ENCODE measurements at regions of chr4 and their contacts with region 1.

Region 1: DNA sequence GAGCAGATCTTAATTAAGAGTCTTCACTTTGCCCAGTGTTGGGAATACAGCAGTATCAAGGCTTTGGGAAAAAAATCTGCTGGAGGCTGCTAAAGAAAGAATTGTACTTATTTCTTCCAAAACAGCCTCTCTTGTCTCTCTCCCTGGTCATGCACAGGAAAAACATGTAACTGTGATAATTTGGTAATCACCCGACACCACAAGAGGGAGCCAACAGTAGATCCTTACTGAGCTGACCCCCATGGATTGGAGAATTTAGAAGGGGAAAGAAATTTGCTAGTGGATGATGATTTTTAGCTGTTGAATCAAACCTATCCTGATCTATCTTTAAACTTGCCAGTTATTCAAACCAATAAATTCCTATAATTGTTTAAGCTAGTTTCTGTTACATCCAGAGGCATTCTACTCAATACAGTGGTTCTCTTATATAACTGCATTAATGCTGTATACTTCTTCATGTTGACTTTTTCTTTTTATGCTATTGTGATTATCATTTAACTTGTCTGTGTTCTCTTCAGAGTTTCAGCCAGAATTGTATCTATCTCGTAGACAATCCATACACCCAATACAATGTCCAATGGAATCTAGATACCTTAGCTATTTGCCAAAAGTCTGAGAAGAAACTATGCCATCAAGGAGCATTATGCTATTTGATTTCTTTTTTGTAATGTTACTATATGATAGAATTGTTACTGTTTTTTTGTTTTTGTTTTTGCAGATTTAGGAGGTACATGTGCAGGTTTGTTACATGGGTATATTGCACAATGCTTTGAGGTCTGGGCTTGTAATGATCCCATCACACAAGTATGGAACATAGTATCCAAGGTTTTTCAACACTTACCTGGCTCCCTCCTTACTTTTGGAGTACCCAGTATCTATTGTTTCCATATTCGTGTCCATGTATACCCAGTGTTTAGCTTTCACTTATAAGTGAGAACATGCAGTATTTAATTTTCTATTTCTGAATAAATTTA is 31.3 kb upstream of the ARHGEF38 start:
- DNase-seq: peak; percentile 15
- ATAC-seq: peak; percentile 95
- H3K4me3 ChIP-seq: no peak overlapping the region
- H3K27ac ChIP-seq: no peak overlapping the region
- H3K4me1 ChIP-seq: no peaks in the 10 kb centered on the region
- H3K27me3 ChIP-seq: no peaks in the 10 kb centered on the region
- CTCF ChIP-seq: peak; percentile 60 to 82 (median 70)
- EP300 ChIP-seq: no peak
- POLR2A ChIP-seq: no peak
- RAD21 ChIP-seq: peak; percentile 96

Region 2: DNA sequence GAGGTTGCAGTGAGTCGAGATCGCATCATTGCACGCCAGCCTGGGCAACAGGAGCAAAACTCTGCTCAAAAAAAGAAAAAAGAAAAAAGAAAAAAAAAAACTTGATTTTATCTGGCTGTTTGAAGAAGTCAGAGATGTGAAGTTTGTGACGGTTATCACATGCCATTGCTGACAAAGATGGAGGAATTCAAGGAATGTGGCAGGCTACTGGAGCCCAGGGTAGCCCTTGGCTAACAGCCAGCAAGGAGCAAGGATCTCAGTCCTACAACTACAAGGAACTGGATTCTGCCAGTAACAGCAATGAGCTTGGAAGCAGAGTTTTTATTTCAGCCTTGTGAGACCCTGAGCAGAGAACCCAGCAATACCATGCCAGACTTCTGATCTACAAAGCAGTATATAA is 398.8 kb before region 1 on chr4:
- CTCF ChIA-PET with region 1: no interaction called
- POLR2A ChIA-PET with region 1: no interaction called
- RAD21 ChIA-PET with region 1: no interaction called
- SMC1A ChIA-PET with region 1: no interaction called
- in situ Hi-C with region 1: no loop called
- intact Hi-C with region 1: no loop called
- DNase-seq: no peak
- ATAC-seq: no peak
- H3K4me3 ChIP-seq: no peak overlapping the region
- H3K27ac ChIP-seq: no peak overlapping the region
- H3K4me1 ChIP-seq: no peaks in the 10 kb centered on the region
- H3K27me3 ChIP-seq: no peaks in the 10 kb centered on the region
- CTCF ChIP-seq: no peak
- EP300 ChIP-seq: no peak
- POLR2A ChIP-seq: no peak
- RAD21 ChIP-seq: no peak

Region 3: GRCh38 chr4:105544520-105545286 is 23.6 kb after region 1 on chr4:
- CTCF ChIA-PET with region 1: interaction called, 21 read pairs
- POLR2A ChIA-PET with region 1: no interaction called
- RAD21 ChIA-PET with region 1: interaction called, 5 read pairs
- SMC1A ChIA-PET with region 1: interaction called, 4 read pairs
- in situ Hi-C with region 1: no loop called
- intact Hi-C with region 1: no loop called
- DNase-seq: no peak
- ATAC-seq: no peak
- H3K4me3 ChIP-seq: no peak overlapping the region
- H3K27ac ChIP-seq: no peak overlapping the region
- H3K4me1 ChIP-seq: no peaks in the 10 kb centered on the region
- H3K27me3 ChIP-seq: no peaks in the 10 kb centered on the region
- CTCF ChIP-seq: no peak
- EP300 ChIP-seq: no peak
- POLR2A ChIP-seq: no peak
- RAD21 ChIP-seq: no peak

Region 4: GRCh38 chr4:105594099-105594993 is 73.2 kb after region 1 on chr4:
- CTCF ChIA-PET with region 1: interaction called, 8 read pairs
- POLR2A ChIA-PET with region 1: no interaction called
- RAD21 ChIA-PET with region 1: no interaction called
- SMC1A ChIA-PET with region 1: interaction called, 4 read pairs
- in situ Hi-C with region 1: no loop called
- intact Hi-C with region 1: loop called (anchors 5 kb)
- DNase-seq: peak; percentile 59
- ATAC-seq: peak; percentile 95
- H3K4me3 ChIP-seq: peak overlapping the region; percentile 47
- H3K27ac ChIP-seq: peak overlapping the region; percentile 77
- H3K4me1 ChIP-seq: no peaks in the 10 kb centered on the region; the same call in 1 of the 2 replicates
- H3K27me3 ChIP-seq: no peaks in the 10 kb centered on the region
- CTCF ChIP-seq: no peak
- EP300 ChIP-seq: peak; percentile 85 to 92
- POLR2A ChIP-seq: no peak
- RAD21 ChIP-seq: no peak

Region 5: GRCh38 chr4:105631818-105632400 is 110.8 kb after region 1 on chr4:
- CTCF ChIA-PET with region 1: interaction called, 5 read pairs
- POLR2A ChIA-PET with region 1: no interaction called
- RAD21 ChIA-PET with region 1: interaction called, 6 read pairs
- SMC1A ChIA-PET with region 1: interaction called, 13 read pairs
- in situ Hi-C with region 1: no loop called
- intact Hi-C with region 1: no loop called
- DNase-seq: no peak
- ATAC-seq: peak; percentile 20; the same call in 2 of the 3 replicates
- H3K4me3 ChIP-seq: no peak overlapping the region
- H3K27ac ChIP-seq: no peak overlapping the region
- H3K4me1 ChIP-seq: peaks cover 15% of the 10 kb centered on the region
- H3K27me3 ChIP-seq: no peaks in the 10 kb centered on the region
- CTCF ChIP-seq: no peak
- EP300 ChIP-seq: no peak
- POLR2A ChIP-seq: no peak
- RAD21 ChIP-seq: no peak

Region 6: GRCh38 chr4:105666693-105667092 is 145.6 kb after region 1 on chr4:
- CTCF ChIA-PET with region 1: interaction called, 160 read pairs
- POLR2A ChIA-PET with region 1: interaction called, 4 read pairs
- RAD21 ChIA-PET with region 1: interaction called, 103 read pairs
- SMC1A ChIA-PET with region 1: interaction called, 146 read pairs
- in situ Hi-C with region 1: no loop called
- intact Hi-C with region 1: loop called (anchors 1 kb)
- DNase-seq: no peak
- ATAC-seq: peak; percentile 85
- H3K4me3 ChIP-seq: no peak overlapping the region
- H3K27ac ChIP-seq: no peak overlapping the region
- H3K4me1 ChIP-seq: no peaks in the 10 kb centered on the region
- H3K27me3 ChIP-seq: no peaks in the 10 kb centered on the region
- CTCF ChIP-seq: peak; percentile 28 to 44 (median 34); a peak in 4 of 6 replicates
- EP300 ChIP-seq: no peak
- POLR2A ChIP-seq: no peak
- RAD21 ChIP-seq: peak; percentile 72

Region 7: DNA sequence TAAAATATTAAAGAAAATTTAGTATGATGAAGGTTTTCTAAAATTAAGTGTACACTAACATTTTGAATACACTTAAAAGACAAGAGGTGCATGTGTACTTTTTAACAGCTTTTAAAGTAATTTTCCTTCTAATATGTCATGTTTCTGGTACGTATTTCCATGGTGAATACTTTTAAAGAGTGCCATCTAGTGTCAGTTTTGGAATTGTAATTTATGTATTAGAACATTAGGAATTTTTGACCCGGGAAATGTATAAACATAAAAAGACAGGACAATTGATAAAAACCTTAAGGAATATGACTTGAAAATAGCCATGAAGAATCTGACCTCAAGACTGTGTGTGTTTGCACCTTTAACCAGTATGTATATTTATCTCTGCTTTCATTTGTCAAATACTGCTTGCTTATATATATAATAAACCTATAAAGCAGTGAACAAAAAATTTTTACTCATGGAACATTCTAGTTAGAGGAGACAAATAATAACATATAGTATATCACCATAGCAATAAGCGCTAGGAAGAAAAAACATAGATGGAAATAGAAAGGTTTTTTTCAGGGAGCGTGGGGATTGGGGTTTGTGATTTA is 194.7 kb after region 1 on chr4:
- CTCF ChIA-PET with region 1: interaction called, 106 read pairs
- POLR2A ChIA-PET with region 1: no interaction called
- RAD21 ChIA-PET with region 1: interaction called, 46 read pairs
- SMC1A ChIA-PET with region 1: interaction called, 29 read pairs
- in situ Hi-C with region 1: no loop called
- intact Hi-C with region 1: loop called (anchors 1 kb)
- DNase-seq: no peak
- ATAC-seq: 0 out of 3 replicates have a peak, but pooled peaks have one; percentile 10
- H3K4me3 ChIP-seq: no peak overlapping the region
- H3K27ac ChIP-seq: no peak overlapping the region
- H3K4me1 ChIP-seq: peaks cover 3% of the 10 kb centered on the region; the same call in 1 of the 2 replicates
- H3K27me3 ChIP-seq: no peaks in the 10 kb centered on the region
- CTCF ChIP-seq: peak; percentile 17 to 48 (median 36); a peak in 2 of 6 replicates
- EP300 ChIP-seq: no peak
- POLR2A ChIP-seq: no peak
- RAD21 ChIP-seq: peak; percentile 49

Measured in GM12878 (cell line).